H1 (cell line): ENCODE measurements at regions of chr10 and their contacts with region 1.

Region 1: DNA sequence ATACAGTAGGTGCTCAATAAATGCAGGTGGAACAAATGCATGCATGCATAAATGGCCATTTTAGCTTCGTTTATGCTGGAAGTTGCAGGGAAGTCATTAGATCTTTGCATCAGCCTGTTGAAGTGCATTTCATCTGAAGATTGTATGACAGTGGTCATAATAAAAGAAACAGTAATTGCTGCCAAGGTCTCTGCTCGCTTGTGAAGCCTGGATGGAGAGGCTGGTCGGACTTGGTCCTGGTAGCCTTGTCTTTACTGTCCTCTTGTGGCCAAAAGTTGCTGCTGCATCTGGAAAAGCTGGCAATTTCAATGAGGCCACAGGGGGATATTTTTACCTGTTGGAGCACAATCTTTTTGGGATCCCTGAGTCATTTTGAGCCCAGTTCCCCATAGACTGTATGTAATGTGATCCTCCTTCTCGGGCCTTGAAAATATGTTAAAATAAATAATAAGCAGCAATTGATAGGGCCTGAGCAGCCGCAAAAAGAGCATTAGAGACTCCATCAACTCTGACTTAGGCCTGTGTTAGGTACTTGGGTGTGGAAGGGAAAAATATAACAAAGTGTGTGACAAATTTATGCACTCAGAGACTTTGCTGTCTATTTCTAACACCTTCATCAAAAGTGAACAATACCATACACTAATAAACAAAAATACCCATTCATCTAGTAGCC is 31.6 kb upstream of the HABP2 start:
- DNase-seq: peak in 1 of 2 experiments; percentile 75
- H3K4me3 ChIP-seq: no peak overlapping the region
- H3K27ac ChIP-seq: no peak overlapping the region
- H3K4me1 ChIP-seq: no peaks in the 10 kb centered on the region
- H3K27me3 ChIP-seq: no peaks in the 10 kb centered on the region; a peak in 1 of 7 replicates
- CTCF ChIP-seq: peak; percentile 79 to 98 (median 96)
- EP300 ChIP-seq: no peak
- POLR2A ChIP-seq: no peak
- RAD21 ChIP-seq: peak; percentile 97 to 98

Region 2: DNA sequence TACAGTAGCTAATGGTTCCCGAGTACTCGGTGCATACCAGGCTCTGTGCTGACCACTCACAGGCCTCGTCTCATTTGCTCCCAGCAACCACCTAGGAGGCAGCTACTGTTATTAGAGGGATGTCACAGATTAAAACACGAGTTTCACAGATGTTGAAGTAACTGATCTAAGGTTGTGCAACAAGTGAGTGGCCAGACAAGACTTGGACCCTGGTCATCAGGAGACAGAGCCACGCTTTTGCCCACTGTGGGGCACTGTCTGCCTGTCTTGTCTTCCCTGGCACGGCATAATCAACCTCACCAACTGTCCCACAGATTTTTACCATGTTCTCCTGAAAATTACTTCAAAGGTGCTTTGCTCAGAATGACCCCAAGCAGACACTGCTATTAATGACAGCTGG is 80.0 kb before region 1 on chr10:
- CTCF ChIA-PET with region 1: interaction called, 16 read pairs
- POLR2A ChIA-PET with region 1: no interaction called
- DNase-seq: no peak
- H3K4me3 ChIP-seq: no peak overlapping the region
- H3K27ac ChIP-seq: no peak overlapping the region
- H3K4me1 ChIP-seq: no peaks in the 10 kb centered on the region; a peak in 1 of 7 replicates
- H3K27me3 ChIP-seq: no peaks in the 10 kb centered on the region
- CTCF ChIP-seq: peak; percentile 26 to 49 (median 37); a peak in 3 of 4 replicates
- EP300 ChIP-seq: no peak
- POLR2A ChIP-seq: no peak
- RAD21 ChIP-seq: peak; percentile 44 to 56; a peak in 3 of 4 replicates

Region 3: GRCh38 chr10:113496111-113497109 is 24.8 kb before region 1 on chr10:
- CTCF ChIA-PET with region 1: interaction called, 23 read pairs
- POLR2A ChIA-PET with region 1: no interaction called
- DNase-seq: no peak
- H3K4me3 ChIP-seq: no peak overlapping the region
- H3K27ac ChIP-seq: no peak overlapping the region
- H3K4me1 ChIP-seq: peaks cover 0 to 3% (median 0%) of the 10 kb centered on the region in 4 experiments; a peak in 1 of 7 replicates
- H3K27me3 ChIP-seq: no peaks in the 10 kb centered on the region
- CTCF ChIP-seq: no peak
- EP300 ChIP-seq: no peak
- POLR2A ChIP-seq: no peak
- RAD21 ChIP-seq: no peak

Region 4: GRCh38 chr10:113557424-113557862 is 36.2 kb after region 1 on chr10:
- CTCF ChIA-PET with region 1: interaction called, 57 read pairs
- POLR2A ChIA-PET with region 1: no interaction called
- DNase-seq: no peak
- H3K4me3 ChIP-seq: peak overlapping the region in 1 of 4 experiments; percentile 5; a peak in 1 of 8 replicates
- H3K27ac ChIP-seq: no peak overlapping the region
- H3K4me1 ChIP-seq: peaks cover 2 to 20% (median 13%) of the 10 kb centered on the region in 4 experiments
- H3K27me3 ChIP-seq: peaks cover 86 to 98% (median 94%) of the 10 kb centered on the region in 4 experiments
- CTCF ChIP-seq: no peak
- EP300 ChIP-seq: no peak
- POLR2A ChIP-seq: no peak
- RAD21 ChIP-seq: no peak

Region 5: DNA sequence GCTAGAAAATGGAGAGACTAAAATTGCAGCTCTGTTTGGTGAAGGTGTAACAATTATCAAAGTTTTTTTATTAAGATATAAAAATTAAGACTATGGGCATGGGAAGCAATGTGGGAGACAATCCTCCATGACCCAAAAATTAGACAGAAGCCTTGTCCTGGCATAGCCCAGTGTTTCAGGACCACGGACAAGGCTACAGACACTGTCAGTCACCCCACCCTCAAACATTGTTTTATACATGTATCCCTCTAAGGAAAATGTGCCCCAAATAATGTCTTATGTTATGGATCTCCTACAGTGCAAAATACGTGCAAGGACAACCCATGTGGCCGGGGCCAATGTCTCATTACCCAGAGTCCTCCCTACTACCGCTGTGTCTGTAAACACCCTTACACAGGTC is 55.6 kb after region 1 on chr10:
- CTCF ChIA-PET with region 1: no interaction called
- POLR2A ChIA-PET with region 1: no interaction called
- DNase-seq: peak in 1 of 2 experiments; percentile 53
- H3K4me3 ChIP-seq: no peak overlapping the region
- H3K27ac ChIP-seq: no peak overlapping the region
- H3K4me1 ChIP-seq: no peaks in the 10 kb centered on the region; a peak in 1 of 7 replicates
- H3K27me3 ChIP-seq: no peaks in the 10 kb centered on the region; a peak in 4 of 7 replicates
- CTCF ChIP-seq: no peak
- EP300 ChIP-seq: no peak
- POLR2A ChIP-seq: no peak
- RAD21 ChIP-seq: no peak

Region 6: GRCh38 chr10:113616233-113617074 is 95.2 kb after region 1 on chr10:
- CTCF ChIA-PET with region 1: interaction called, 17 read pairs
- POLR2A ChIA-PET with region 1: no interaction called
- DNase-seq: no peak
- H3K4me3 ChIP-seq: peak overlapping the region in 3 of 4 experiments; percentile 11 to 45 (median 23); a peak in 4 of 8 replicates
- H3K27ac ChIP-seq: no peak overlapping the region
- H3K4me1 ChIP-seq: peaks cover 2 to 35% (median 30%) of the 10 kb centered on the region in 4 experiments
- H3K27me3 ChIP-seq: peaks cover 0 to 9% (median under 1%) of the 10 kb centered on the region in 4 experiments; a peak in 3 of 7 replicates
- CTCF ChIP-seq: peak in 2 of 3 experiments; percentile 43 to 61; a peak in 3 of 4 replicates
- EP300 ChIP-seq: no peak
- POLR2A ChIP-seq: no peak
- RAD21 ChIP-seq: peak; percentile 58 to 59